ENCODE measurements at regions of chr14 and their contacts with region 1.

Region 1: GRCh38 chr14:61750708-61751474 is 11.3 kb upstream of the SNAPC1 start:
- DNase-seq: peak; percentile 89 to 94 (median 91)
- ATAC-seq: peak; percentile 95 to 98 (median 97)
- H3K4me3 ChIP-seq: peak overlapping the region; percentile 37 to 73 (median 65)
- H3K27ac ChIP-seq: peak overlapping the region; percentile 65 to 94 (median 92)
- H3K4me1 ChIP-seq: peaks cover 0 to 53% (median 22%) of the 10 kb centered on the region in 12 donors
- H3K27me3 ChIP-seq: no peaks in the 10 kb centered on the region
- CTCF ChIP-seq: no peak
- POLR2A ChIP-seq: peak in 1 of 2 donors; percentile 88

Region 2: GRCh38 chr14:61761959-61762786 is 11.3 kb after region 1 on chr14 and contains the start of gene SNAPC1:
- intact Hi-C with region 1: loop called in 1 of 10 experiments (anchors 1 kb)
- DNase-seq: peak; percentile 97 to 99 (median 98)
- ATAC-seq: peak; percentile 99 to 100 (median 99)
- H3K4me3 ChIP-seq: peak within 1 kb of the TSS; percentile 29 to 90 (median 80)
- H3K27ac ChIP-seq: peak within 1 kb of the TSS; percentile 78 to 97 (median 93)
- H3K4me1 ChIP-seq: peaks cover 0 to 39% (median 18%) of the 10 kb centered on the region in 12 donors
- H3K27me3 ChIP-seq: no peaks in the 10 kb centered on the region
- CTCF ChIP-seq: no peak
- POLR2A ChIP-seq: peak; percentile 77 to 92
- total RNA-seq, gene SNAPC1: 5.9 to 9.0 (median 7.2) TPM

Region 3: DNA sequence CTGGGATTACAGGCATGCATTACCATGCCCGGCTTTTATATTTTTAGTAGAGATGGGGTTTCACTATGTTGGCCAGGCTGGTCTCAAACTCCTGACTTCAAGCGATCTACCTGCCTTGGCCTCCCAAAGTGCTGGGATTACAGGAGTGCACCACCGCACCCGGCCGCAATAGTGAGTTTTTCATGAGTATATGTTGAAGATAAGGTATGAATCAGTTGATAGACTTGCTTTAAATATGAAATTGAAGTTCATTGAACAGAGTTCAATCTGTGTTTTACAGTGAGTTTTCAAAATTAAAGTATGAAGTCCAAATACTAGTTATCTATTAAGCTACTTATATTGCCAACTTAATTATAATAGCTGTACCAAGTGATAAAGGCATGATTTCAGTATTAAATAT is 46.4 kb after region 1 on chr14:
- intact Hi-C with region 1: no loop called
- DNase-seq: no peak
- ATAC-seq: no peak
- H3K4me3 ChIP-seq: no peak overlapping the region
- H3K27ac ChIP-seq: no peak overlapping the region
- H3K4me1 ChIP-seq: no peaks in the 10 kb centered on the region
- H3K27me3 ChIP-seq: no peaks in the 10 kb centered on the region
- CTCF ChIP-seq: no peak
- POLR2A ChIP-seq: no peak

Measured in heart left ventricle (tissue), 16 donors.